Naive thymus-derived CD4-positive, alpha-beta T cell (primary cell): ENCODE measurements at regions of chr12 and their contacts with region 1.

Region 1: GRCh38 chr12:4276524-4277204 is 3.1 kb downstream of the CCND2 start:
- DNase-seq: peak; percentile 61 to 88 (median 87)
- ATAC-seq: peak; percentile 59
- H3K4me3 ChIP-seq: peak overlapping the region; percentile 85
- H3K4me3 Mint-ChIP-seq: peak overlapping the region; percentile 89 to 99 (median 95)
- H3K27ac ChIP-seq: peak overlapping the region; percentile 97
- H3K27ac Mint-ChIP-seq: peak overlapping the region; percentile 82 to 98 (median 96)
- H3K4me1 ChIP-seq: peaks cover 34 to 56% of the 10 kb centered on the region in 2 donors
- H3K4me1 Mint-ChIP-seq: peaks cover 41 to 66% (median 59%) of the 10 kb centered on the region in 7 donors
- H3K27me3 ChIP-seq: no peaks in the 10 kb centered on the region
- H3K27me3 Mint-ChIP-seq: peaks cover 0 to 2% (median 0%) of the 10 kb centered on the region in 5 donors

Region 2: GRCh38 chr12:3885277-3886094 is 391.2 kb before region 1 on chr12:
- CTCF ChIA-PET with region 1: interaction called, 91 read pairs
- POLR2A ChIA-PET with region 1: interaction called, 44 read pairs
- intact Hi-C with region 1: loop called (anchors 1 kb)
- DNase-seq: peak in 7 of 9 donors; percentile 55 to 78 (median 69)
- ATAC-seq: peak; percentile 69
- H3K4me3 ChIP-seq: no peak overlapping the region
- H3K4me3 Mint-ChIP-seq: peak overlapping the region in 7 of 10 donors; percentile 1 to 61 (median 26)
- H3K27ac ChIP-seq: no peak overlapping the region
- H3K27ac Mint-ChIP-seq: peak overlapping the region in 8 of 9 donors; percentile 45 to 93 (median 66)
- H3K4me1 ChIP-seq: no peaks in the 10 kb centered on the region
- H3K4me1 Mint-ChIP-seq: peaks cover 6 to 26% (median 16%) of the 10 kb centered on the region in 7 donors
- H3K27me3 ChIP-seq: no peaks in the 10 kb centered on the region
- H3K27me3 Mint-ChIP-seq: peaks cover 0 to 10% (median 0%) of the 10 kb centered on the region in 5 donors

Region 3: DNA sequence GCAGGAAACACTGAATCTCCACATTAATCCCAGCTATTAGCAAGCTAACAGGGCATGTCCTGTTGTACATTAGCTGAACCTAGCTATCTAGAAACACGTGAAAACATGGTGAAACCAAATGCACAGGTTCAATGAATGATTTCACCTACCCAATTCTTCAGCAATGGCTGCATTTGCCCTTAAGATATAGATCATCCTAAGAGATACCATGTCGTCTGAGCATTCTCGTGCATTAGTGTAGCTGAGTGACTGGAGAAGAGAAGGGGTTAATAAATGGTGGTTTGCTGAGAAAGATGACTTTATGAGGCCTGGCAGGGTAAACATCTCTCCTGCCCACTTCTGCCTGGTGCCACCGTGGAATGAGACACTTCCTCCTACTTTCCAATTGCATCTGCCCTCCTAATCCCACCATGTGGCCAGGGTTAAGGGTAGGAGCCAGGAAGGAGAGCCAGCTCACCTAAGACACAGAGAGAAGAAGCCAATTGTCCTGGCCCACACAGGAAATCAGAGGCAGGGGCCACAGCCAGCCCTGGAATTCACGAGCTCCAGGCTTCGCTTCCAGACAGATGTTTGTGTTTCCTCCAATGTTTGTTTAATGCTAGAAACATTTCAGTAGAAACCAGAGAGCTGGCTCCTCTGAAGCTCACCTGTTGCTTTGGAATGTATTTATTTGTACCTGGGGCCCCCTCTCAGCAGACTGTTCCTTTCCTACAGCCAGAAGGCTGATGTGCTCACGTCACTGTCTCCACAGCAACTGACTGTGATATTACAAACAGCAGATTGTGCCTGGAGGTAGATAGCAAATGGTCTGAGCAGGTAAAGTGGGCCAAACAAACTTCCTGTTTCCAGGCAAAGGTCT is 277.5 kb before region 1 on chr12:
- CTCF ChIA-PET with region 1: interaction called, 102 read pairs
- POLR2A ChIA-PET with region 1: interaction called, 7 read pairs
- intact Hi-C with region 1: loop called (anchors 1 kb)
- DNase-seq: peak in 5 of 9 donors; percentile 15 to 37 (median 21)
- ATAC-seq: peak; percentile 58
- H3K4me3 ChIP-seq: no peak overlapping the region
- H3K4me3 Mint-ChIP-seq: no peak overlapping the region
- H3K27ac ChIP-seq: no peak overlapping the region
- H3K27ac Mint-ChIP-seq: peak overlapping the region in 3 of 9 donors; percentile 18 to 37 (median 36)
- H3K4me1 ChIP-seq: peaks cover 0 to 11% of the 10 kb centered on the region in 2 donors
- H3K4me1 Mint-ChIP-seq: peaks cover 2 to 49% (median 39%) of the 10 kb centered on the region in 7 donors
- H3K27me3 ChIP-seq: no peaks in the 10 kb centered on the region
- H3K27me3 Mint-ChIP-seq: peaks cover 0 to under 1% (median 0%) of the 10 kb centered on the region in 5 donors

Region 4: DNA sequence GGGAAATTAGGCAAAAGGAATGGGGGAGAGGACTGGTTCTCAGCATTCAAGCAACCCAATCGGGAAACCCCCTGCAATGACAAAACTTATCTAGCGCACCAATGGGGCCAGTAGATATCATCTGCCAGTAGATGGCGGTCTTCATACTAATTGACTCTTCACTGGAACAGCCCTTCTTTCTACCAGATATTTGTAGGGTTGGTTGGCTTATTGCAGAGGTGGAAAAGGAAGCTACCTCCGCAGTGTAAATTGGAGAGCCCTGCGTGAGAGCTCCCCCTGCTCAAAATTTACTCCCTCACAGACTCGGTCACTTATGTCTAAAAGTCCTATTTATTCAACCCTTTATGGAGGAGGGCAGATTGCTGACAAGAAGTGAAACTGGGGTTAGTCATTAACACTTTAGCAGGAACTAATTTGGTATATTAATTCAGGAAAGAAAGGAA is 169.2 kb before region 1 on chr12:
- CTCF ChIA-PET with region 1: interaction called, 69 read pairs
- POLR2A ChIA-PET with region 1: interaction called, 13 read pairs
- intact Hi-C with region 1: loop called (anchors 1 kb)
- DNase-seq: peak in 8 of 9 donors; percentile 57 to 83 (median 76)
- ATAC-seq: peak; percentile 99
- H3K4me3 ChIP-seq: no peak overlapping the region
- H3K4me3 Mint-ChIP-seq: peak overlapping the region in 7 of 10 donors; percentile 21 to 74 (median 52)
- H3K27ac ChIP-seq: no peak overlapping the region
- H3K27ac Mint-ChIP-seq: peak overlapping the region in 8 of 9 donors; percentile 6 to 88 (median 55)
- H3K4me1 ChIP-seq: peaks cover 0 to 3% of the 10 kb centered on the region in 2 donors
- H3K4me1 Mint-ChIP-seq: peaks cover 6 to 51% (median 13%) of the 10 kb centered on the region in 7 donors
- H3K27me3 ChIP-seq: no peaks in the 10 kb centered on the region
- H3K27me3 Mint-ChIP-seq: peaks cover 0 to 7% (median 0%) of the 10 kb centered on the region in 5 donors

Region 5: GRCh38 chr12:4148418-4149056 is 128.1 kb before region 1 on chr12:
- CTCF ChIA-PET with region 1: interaction called, 28 read pairs
- POLR2A ChIA-PET with region 1: interaction called, 13 read pairs
- intact Hi-C with region 1: loop called (anchors 1 kb)
- DNase-seq: peak in 1 of 9 donors; percentile 37
- ATAC-seq: peak; percentile 80
- H3K4me3 ChIP-seq: no peak overlapping the region
- H3K4me3 Mint-ChIP-seq: no peak overlapping the region
- H3K27ac ChIP-seq: no peak overlapping the region
- H3K27ac Mint-ChIP-seq: peak overlapping the region in 5 of 9 donors; percentile 14 to 70 (median 61)
- H3K4me1 ChIP-seq: peaks cover 13 to 41% of the 10 kb centered on the region in 2 donors
- H3K4me1 Mint-ChIP-seq: peaks cover 20 to 93% (median 34%) of the 10 kb centered on the region in 7 donors
- H3K27me3 ChIP-seq: no peaks in the 10 kb centered on the region
- H3K27me3 Mint-ChIP-seq: no peaks in the 10 kb centered on the region

Region 6: GRCh38 chr12:4320853-4321701 is 44.4 kb after region 1 on chr12 and contains the start of gene TIGAR:
- CTCF ChIA-PET with region 1: interaction called, 3 read pairs
- POLR2A ChIA-PET with region 1: interaction called, 4 read pairs
- intact Hi-C with region 1: loop called (anchors 1 kb)
- DNase-seq: peak; percentile 86 to 97 (median 90)
- ATAC-seq: peak; percentile 99
- H3K4me3 ChIP-seq: peak within 1 kb of the TSS; percentile 85
- H3K4me3 Mint-ChIP-seq: peak within 1 kb of the TSS; percentile 83 to 97 (median 95)
- H3K27ac ChIP-seq: peak within 1 kb of the TSS; percentile 84
- H3K27ac Mint-ChIP-seq: peak within 1 kb of the TSS; percentile 74 to 96 (median 92)
- H3K4me1 ChIP-seq: peaks cover 14 to 15% of the 10 kb centered on the region in 2 donors
- H3K4me1 Mint-ChIP-seq: peaks cover 21 to 53% (median 46%) of the 10 kb centered on the region in 7 donors
- H3K27me3 ChIP-seq: no peaks in the 10 kb centered on the region
- H3K27me3 Mint-ChIP-seq: no peaks in the 10 kb centered on the region
- total RNA-seq, gene TIGAR: 7.1 to 15.8 (median 11.1) TPM